ENCODE measurements at regions of chr2 and their contacts with region 1.

Region 1: DNA sequence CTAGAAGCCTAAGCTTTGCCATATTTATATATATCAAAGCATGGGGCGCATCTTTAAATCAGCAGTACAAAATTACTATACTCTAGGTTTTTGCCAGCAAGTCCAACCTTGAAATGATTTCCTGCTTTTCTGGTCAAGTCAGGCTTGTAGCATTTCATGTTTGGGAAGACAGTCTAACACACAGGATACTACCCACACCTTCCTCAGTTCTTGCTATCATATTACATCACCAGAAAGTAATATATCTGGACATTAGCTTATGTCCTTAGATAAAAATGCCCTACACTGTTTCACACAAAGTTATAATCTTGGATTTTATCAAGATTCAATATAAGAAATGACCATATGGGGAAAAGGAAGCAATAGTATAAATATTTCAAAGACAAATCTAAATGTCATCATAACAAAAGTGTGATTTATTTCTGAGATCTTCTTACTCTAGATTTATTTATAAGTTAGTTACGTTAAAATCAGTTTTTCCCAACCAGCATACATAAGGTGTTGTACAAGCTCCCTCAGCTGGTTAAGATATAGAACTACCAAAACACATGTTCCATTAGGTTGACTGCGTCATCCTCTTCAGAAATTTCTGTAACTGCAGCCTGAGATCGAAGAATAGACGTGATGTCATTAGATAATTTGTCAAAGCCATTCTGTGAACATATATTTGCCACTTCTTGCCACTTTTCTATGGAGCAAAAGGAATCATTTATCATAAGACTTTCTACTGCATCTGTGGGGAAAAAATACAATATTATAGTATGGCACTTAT is 56.7 kb downstream of the CLHC1 start:
- DNase-seq: no peak
- ATAC-seq: peak; percentile 70 to 79

Region 2: DNA sequence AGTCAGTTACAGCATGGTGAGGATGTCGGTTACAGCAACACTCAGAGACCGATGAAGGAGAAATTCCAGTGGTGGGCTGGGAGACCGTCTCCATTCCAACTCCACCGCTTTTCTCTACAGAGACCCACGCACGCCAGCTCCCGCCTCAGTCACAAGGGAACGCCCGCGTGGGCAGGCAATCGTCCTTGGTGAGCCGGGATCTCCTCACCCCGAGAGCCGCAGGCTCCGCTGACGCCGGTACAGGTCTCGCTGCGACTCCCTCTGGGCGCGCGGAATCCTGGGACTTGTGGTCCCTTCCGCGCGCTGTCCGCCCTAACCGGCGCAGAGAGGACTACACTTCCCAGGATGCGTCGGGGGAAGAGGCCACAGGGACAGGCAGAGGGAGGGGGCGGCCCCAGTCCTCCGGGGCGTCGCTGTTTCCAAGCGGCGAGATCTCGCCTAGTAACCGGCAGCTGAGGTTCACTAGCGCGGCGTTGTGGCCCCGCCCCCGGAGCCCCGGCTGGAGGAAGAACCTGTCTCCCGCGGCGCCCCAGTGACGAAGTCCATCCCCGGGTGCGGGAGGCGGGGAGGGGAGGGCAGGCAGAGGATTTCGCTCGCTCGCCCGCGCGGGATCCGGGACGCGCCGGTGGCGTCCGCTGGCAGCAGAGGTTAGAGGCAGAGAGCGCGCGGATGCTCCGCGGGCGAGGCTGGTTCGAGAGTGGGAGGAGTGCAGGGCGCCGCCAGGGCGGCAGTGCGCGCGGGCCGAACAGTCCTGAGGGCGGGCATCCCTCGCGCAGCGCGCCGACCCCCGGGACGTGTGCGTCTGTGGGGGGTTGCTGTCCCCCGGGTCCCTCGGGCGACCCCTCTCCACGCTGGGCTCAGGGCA is 452.1 kb before region 1 on chr2 and contains the start of gene EML6:
- intact Hi-C with region 1: loop called in 1 of 2 experiments (anchors 10 kb)
- DNase-seq: peak; percentile 99
- ATAC-seq: peak; percentile 99 to 100
- total RNA-seq, gene EML6: 0.52 to 0.62 TPM

Region 3: DNA sequence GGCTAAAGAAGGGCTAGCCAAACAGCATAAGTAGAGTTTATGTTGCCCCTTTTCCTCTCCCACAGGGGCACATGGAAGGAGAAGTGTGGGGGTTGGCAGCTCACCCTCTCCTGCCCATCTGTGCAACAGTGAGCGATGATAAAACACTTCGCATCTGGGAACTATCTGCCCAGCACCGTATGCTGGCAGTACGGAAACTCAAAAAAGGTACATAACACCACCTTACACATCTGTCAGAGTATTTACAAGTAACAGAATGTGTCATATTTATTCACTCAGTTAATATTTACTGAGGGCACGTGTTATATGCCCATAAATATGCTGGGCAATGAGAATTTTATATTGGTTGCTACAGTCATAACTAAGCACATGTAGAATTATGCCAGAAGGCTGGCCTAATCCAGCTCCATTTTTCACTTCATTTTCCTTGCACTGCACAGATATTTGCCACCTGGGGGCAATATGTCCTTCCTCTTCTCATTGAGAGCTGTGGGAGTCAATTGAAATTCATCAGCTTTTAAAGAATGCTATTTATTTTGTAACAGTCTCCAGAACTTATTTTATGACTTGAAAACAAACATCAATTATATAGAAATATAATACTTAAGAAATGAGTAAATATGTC is 275.8 kb before region 1 on chr2:
- intact Hi-C with region 1: loop called (anchors 5 kb)
- DNase-seq: no peak
- ATAC-seq: peak; percentile 72 to 82

Measured in left cardiac atrium (tissue), 4 donors.